HCT116 (cell line): ENCODE measurements at regions of chr10 and their contacts with region 1.

Region 1: GRCh38 chr10:4767033-4767814 is 58.8 kb upstream of the AKR1E2 start:
- DNase-seq: peak; percentile 38
- ATAC-seq: peak; percentile 58
- H3K4me3 ChIP-seq: no peak overlapping the region
- H3K27ac ChIP-seq: no peak overlapping the region
- H3K4me1 ChIP-seq: peaks cover 13 to 66% of the 10 kb centered on the region in 2 experiments
- H3K27me3 ChIP-seq: no peaks in the 10 kb centered on the region
- CTCF ChIP-seq: peak; percentile 51 to 71 (median 69); a peak in 5 of 6 replicates
- POLR2A ChIP-seq: no peak
- RAD21 ChIP-seq: peak; percentile 90

Region 2: GRCh38 chr10:3239066-3239919 is 1527.9 kb before region 1 on chr10:
- CTCF ChIA-PET with region 1: no interaction called
- POLR2A ChIA-PET with region 1: no interaction called
- RAD21 ChIA-PET with region 1: no interaction called
- intact Hi-C with region 1: loop called (anchors 1 kb)
- DNase-seq: peak; percentile 45
- ATAC-seq: peak; percentile 96
- H3K4me3 ChIP-seq: no peak overlapping the region
- H3K27ac ChIP-seq: no peak overlapping the region
- H3K4me1 ChIP-seq: no peaks in the 10 kb centered on the region
- H3K27me3 ChIP-seq: no peaks in the 10 kb centered on the region
- CTCF ChIP-seq: peak; percentile 46 to 78 (median 70); a peak in 5 of 6 replicates
- POLR2A ChIP-seq: no peak
- RAD21 ChIP-seq: peak; percentile 97

Region 3: DNA sequence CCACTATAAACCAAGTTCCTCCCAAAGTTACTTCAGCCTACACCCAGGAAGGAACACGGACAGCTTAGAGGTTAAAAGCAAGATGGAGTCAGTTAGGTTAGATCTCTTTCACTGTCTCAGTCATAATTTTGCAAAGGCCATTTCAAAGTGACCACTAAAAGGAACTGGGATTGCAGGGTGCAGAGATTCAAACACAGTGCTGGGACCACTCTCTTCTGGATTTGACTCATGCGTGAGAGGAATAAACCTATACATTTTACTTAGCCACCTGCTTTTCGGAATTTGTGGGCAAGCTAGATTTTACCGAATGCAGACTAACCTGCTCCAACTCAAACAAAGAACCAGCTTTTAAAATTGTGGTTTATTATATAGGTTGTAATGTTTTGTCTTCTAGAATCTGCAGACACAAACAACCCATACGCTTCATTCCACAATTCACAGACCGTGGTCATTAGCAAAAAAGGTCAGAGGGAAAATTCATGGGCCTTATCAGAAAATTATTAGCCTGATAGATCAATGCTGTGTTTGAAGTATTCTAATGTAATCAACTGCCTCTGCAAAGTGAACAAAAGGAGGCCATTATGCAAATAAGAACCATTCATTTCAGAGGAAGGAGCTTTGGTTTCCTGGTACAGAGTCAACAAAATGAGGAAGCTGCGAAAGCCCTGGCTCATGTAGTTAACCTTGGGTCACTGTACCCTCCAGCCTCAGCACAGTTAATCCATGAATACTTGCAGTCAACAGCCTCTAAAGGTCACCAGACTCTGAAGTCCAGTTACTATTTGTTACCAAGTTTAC is 639.5 kb before region 1 on chr10:
- CTCF ChIA-PET with region 1: no interaction called
- POLR2A ChIA-PET with region 1: no interaction called
- RAD21 ChIA-PET with region 1: no interaction called
- intact Hi-C with region 1: no loop called
- DNase-seq: no peak
- ATAC-seq: no peak
- H3K4me3 ChIP-seq: no peak overlapping the region
- H3K27ac ChIP-seq: no peak overlapping the region
- H3K4me1 ChIP-seq: peaks cover 10 to 21% of the 10 kb centered on the region in 2 experiments
- H3K27me3 ChIP-seq: no peaks in the 10 kb centered on the region
- CTCF ChIP-seq: no peak
- POLR2A ChIP-seq: no peak
- RAD21 ChIP-seq: no peak

Region 4: DNA sequence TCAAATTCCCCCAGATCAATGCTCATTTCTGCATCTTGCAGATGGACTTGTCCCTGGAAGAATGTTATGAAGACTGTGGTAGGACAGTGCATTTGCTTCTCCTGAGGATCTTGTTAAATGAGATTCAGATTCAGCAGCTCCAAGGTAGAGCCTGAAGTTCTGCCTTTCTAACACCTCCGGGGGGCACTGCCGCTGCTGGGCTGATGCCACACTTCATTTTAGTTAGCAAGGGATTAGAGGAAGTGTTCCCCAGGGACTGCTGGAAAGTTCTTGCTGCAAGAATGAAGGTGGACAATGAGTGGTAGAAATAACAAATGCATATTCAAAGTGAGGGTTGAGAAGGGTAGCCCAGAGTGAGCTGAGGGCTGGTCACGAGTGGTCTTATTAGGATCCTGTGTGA is 375.5 kb before region 1 on chr10:
- CTCF ChIA-PET with region 1: interaction called, 7 read pairs
- POLR2A ChIA-PET with region 1: no interaction called
- RAD21 ChIA-PET with region 1: no interaction called
- intact Hi-C with region 1: loop called (anchors 1 kb)
- DNase-seq: peak; percentile 22
- ATAC-seq: peak; percentile 83
- H3K4me3 ChIP-seq: no peak overlapping the region
- H3K27ac ChIP-seq: no peak overlapping the region
- H3K4me1 ChIP-seq: no peaks in the 10 kb centered on the region
- H3K27me3 ChIP-seq: no peaks in the 10 kb centered on the region
- CTCF ChIP-seq: peak; percentile 50 to 56 (median 54); a peak in 5 of 6 replicates
- POLR2A ChIP-seq: no peak
- RAD21 ChIP-seq: peak; percentile 75

Region 5: DNA sequence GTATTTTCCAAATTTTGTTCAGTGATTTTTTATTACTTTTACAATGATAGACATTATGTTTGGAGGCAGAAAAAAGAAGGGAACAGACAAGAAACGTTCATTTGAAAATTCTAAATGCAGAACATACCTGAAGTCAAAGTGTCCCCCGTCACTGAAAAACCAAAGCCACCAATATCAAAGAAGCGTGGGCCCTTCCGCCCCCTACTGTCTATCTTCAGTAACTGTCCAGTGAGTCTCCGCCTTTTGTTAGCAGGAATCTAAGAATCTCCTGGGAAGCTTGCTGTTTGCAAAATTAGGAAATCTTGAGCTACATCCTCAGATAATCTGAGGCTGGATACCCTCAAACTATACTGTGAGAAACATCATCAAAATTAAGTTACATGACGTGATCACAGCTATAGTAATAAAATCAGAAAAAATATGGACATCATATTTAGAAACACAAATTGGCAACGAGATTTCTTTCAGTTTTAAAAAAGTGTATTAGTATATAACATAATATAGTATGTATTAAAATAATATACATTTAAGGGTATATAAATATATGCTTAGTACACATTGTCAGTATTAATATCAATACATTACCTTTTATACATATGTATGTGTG is 110.5 kb before region 1 on chr10:
- CTCF ChIA-PET with region 1: interaction called, 4 read pairs
- POLR2A ChIA-PET with region 1: interaction called, 3 read pairs
- RAD21 ChIA-PET with region 1: no interaction called
- intact Hi-C with region 1: loop called (anchors 5 kb)
- DNase-seq: peak; percentile 58
- ATAC-seq: peak; percentile 80
- H3K4me3 ChIP-seq: no peak overlapping the region
- H3K27ac ChIP-seq: no peak overlapping the region
- H3K4me1 ChIP-seq: peaks cover 0 to 11% of the 10 kb centered on the region in 2 experiments; a peak in 2 of 4 replicates
- H3K27me3 ChIP-seq: no peaks in the 10 kb centered on the region
- CTCF ChIP-seq: peak; percentile 72 to 90 (median 80); a peak in 5 of 6 replicates
- POLR2A ChIP-seq: no peak
- RAD21 ChIP-seq: peak; percentile 95

Region 6: DNA sequence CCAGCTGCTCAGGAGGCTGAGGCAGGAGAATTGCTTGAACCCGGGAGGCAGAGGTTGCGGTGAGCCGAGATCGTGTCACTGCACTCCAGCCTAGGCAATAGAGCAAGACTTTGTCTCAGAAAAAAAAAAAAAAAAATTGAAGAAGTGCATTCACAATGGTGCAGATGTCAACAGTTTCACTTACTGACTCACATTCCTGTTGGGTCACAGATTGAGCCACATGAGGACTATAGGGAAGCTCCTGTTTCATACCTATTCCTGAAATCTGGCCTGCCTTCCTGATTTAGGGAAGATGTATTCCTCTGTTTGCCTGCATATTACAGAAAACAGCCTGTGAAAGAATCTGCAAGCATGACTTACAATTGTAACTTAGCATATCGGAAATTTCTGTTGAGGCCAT is 507.6 kb after region 1 on chr10:
- CTCF ChIA-PET with region 1: no interaction called
- POLR2A ChIA-PET with region 1: no interaction called
- RAD21 ChIA-PET with region 1: no interaction called
- intact Hi-C with region 1: no loop called
- DNase-seq: no peak
- ATAC-seq: no peak
- H3K4me3 ChIP-seq: no peak overlapping the region
- H3K27ac ChIP-seq: no peak overlapping the region
- H3K4me1 ChIP-seq: no peaks in the 10 kb centered on the region
- H3K27me3 ChIP-seq: no peaks in the 10 kb centered on the region
- CTCF ChIP-seq: no peak
- POLR2A ChIP-seq: no peak
- RAD21 ChIP-seq: no peak

Region 7: GRCh38 chr10:5518138-5518537 is 750.9 kb after region 1 on chr10:
- CTCF ChIA-PET with region 1: no interaction called
- POLR2A ChIA-PET with region 1: no interaction called
- RAD21 ChIA-PET with region 1: no interaction called
- intact Hi-C with region 1: no loop called
- DNase-seq: no peak
- ATAC-seq: no peak
- H3K4me3 ChIP-seq: no peak overlapping the region
- H3K27ac ChIP-seq: no peak overlapping the region
- H3K4me1 ChIP-seq: no peaks in the 10 kb centered on the region
- H3K27me3 ChIP-seq: no peaks in the 10 kb centered on the region
- CTCF ChIP-seq: no peak
- POLR2A ChIP-seq: no peak
- RAD21 ChIP-seq: no peak